G401 (cell line): ENCODE measurements at regions of chr12 and their contacts with region 1.

Region 1: GRCh38 chr12:114232187-114232586 is 173.8 kb downstream of the TBX5 start:
- DNase-seq: no peak

Region 2: GRCh38 chr12:114096461-114096860 is 135.7 kb before region 1 on chr12:
- in situ Hi-C with region 1: no loop called
- DNase-seq: no peak

Region 3: GRCh38 chr12:114174326-114174725 is 57.9 kb before region 1 on chr12:
- in situ Hi-C with region 1: loop called (anchors 5 kb)
- DNase-seq: no peak